CD14-positive monocyte (primary cell): ENCODE measurements at regions of chr12 and their contacts with region 1.

Region 1: DNA sequence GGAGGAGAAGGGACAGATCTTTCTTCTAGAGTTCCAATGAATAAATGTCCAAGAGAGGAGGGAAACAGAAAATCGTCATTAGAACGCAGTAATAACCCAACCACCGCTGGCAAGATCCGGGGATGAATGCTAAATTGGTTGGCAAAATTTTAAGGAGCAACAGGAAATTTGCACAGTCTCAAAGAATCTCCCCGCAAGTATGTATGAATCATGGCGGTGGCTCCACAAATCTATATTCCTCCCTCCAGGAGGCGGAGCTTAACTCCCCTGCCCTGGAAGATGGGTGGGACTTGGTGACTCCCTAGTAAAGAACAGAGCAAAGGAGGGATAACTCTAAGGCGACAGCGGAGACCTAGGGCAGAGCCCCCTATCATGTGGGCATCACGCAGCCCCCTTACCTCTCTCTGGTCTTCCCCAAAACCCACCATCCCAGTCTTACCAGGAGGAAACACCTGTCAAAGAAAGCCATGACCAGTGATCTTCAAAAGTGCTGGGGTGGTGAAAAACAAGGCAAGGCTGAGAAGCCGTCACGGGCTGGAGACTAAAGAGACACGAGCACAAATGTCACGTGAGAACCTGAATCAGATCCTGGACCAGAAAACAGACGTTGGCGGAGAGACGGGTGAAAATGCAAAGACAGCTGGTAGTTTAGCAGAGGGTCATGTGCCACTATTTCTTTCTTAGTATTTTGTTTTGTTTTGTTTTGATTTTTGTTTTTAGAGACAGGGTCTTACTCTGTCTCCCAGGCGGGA is 125.8 kb downstream of the NCOR2 start:
- DNase-seq: no peak
- H3K4me3 ChIP-seq: no peak overlapping the region
- H3K4me3 Mint-ChIP-seq: no peak overlapping the region
- H3K27ac ChIP-seq: no peak overlapping the region
- H3K27ac Mint-ChIP-seq: peak overlapping the region in 1 of 7 donors; percentile 70
- H3K4me1 ChIP-seq: no peaks in the 10 kb centered on the region
- H3K4me1 Mint-ChIP-seq: peaks cover 3% of the 10 kb centered on the region
- H3K27me3 ChIP-seq: no peaks in the 10 kb centered on the region
- H3K27me3 Mint-ChIP-seq: no peaks in the 10 kb centered on the region
- CTCF ChIP-seq: no peak

Region 2: DNA sequence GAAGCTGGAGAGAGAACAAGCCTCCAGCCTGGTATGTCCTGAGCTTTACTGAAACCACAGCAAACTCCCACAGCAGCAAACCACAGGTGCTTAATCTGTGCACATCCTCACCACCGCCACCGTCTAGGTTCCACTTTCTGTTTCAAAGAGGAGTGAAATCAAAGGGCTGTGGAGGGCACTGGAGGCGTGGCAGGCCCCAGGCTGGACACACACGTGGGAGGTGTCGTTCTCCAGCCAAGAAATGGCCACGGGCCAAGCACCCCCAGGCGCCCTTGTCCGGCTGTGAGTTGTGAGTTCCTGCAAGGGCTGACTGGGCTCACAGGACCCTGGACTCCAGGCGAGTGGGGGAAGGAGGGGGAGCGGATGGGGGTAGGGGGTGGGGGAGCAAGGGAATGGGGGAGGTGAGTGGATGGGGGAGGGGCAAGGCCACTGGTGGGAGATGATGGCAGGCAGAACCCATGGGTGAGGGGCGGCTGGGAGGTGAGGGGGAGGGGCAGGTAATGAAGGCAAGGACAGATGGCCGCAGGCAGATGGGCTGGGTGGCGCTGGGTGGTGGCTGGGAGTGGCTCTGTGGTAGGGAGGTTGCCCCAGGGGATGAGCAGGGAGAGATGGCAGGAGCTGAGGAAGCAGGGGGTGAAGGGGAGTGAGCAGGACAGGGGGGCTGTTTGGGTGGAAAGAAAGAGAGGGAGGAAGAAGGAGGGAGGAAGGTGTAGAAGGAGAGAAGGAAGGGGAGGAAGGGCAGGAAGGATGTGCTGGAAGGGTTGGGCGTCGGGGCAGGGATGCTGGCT is 39.0 kb after region 1 on chr12:
- intact Hi-C with region 1: loop called in 1 of 2 experiments (anchors 5 kb)
- DNase-seq: no peak
- H3K4me3 ChIP-seq: no peak overlapping the region
- H3K4me3 Mint-ChIP-seq: no peak overlapping the region
- H3K27ac ChIP-seq: no peak overlapping the region
- H3K27ac Mint-ChIP-seq: peak overlapping the region in 4 of 7 donors; percentile 8 to 54 (median 37)
- H3K4me1 ChIP-seq: no peaks in the 10 kb centered on the region
- H3K4me1 Mint-ChIP-seq: peaks cover 19% of the 10 kb centered on the region
- H3K27me3 ChIP-seq: no peaks in the 10 kb centered on the region
- H3K27me3 Mint-ChIP-seq: peaks cover 0 to 3% (median 1%) of the 10 kb centered on the region in 3 donors
- CTCF ChIP-seq: no peak

Region 3: GRCh38 chr12:124493809-124494750 is 52.5 kb after region 1 on chr12:
- intact Hi-C with region 1: no loop called
- DNase-seq: peak in 1 of 3 donors; percentile 27
- H3K4me3 ChIP-seq: no peak overlapping the region
- H3K4me3 Mint-ChIP-seq: peak overlapping the region in 1 of 2 donors; percentile 48
- H3K27ac ChIP-seq: peak overlapping the region in 1 of 2 donors; percentile 37
- H3K27ac Mint-ChIP-seq: peak overlapping the region; percentile 20 to 91 (median 76)
- H3K4me1 ChIP-seq: peaks cover 22 to 24% of the 10 kb centered on the region in 2 donors
- H3K4me1 Mint-ChIP-seq: peaks cover 27% of the 10 kb centered on the region
- H3K27me3 ChIP-seq: no peaks in the 10 kb centered on the region
- H3K27me3 Mint-ChIP-seq: peaks cover 0 to 4% (median 0%) of the 10 kb centered on the region in 3 donors
- CTCF ChIP-seq: no peak